ENCODE measurements at regions of chr11 and their contacts with region 1.

Region 1: DNA sequence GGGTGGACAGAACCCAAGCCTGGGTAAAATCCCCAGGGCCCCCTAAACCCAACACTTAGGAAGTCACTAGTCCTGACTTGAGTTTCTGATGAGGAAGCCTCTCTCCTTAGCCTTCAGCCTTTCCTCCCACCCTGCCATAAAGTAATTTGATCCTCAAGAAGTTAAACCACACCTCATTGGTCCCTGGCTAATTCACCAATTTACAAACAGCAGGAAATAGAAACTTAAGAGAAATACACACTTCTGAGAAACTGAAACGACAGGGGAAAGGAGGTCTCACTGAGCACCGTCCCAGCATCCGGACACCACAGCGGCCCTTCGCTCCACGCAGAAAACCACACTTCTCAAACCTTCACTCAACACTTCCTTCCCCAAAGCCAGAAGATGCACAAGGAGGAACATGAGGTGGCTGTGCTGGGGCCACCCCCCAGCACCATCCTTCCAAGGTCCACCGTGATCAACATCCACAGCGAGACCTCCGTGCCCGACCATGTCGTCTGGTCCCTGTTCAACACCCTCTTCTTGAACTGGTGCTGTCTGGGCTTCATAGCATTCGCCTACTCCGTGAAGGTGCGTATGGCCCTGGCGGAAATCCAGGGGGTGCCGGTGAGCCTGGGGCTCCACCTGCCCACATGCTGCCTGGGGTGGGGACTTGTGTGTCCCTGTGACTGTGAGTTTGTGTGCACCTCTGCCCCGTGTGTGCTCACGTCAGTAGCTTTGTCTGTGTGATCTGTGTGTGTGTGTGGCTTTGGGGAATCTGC is at the start of gene IFITM1:
- DNase-seq: peak; percentile 74
- H3K4me3 Mint-ChIP-seq: peak within 1 kb of the TSS; percentile 90
- H3K27ac Mint-ChIP-seq: peak within 1 kb of the TSS; percentile 91
- H3K4me1 Mint-ChIP-seq: peaks cover 34% of the 10 kb centered on the region
- H3K27me3 Mint-ChIP-seq: no peaks in the 10 kb centered on the region
- total RNA-seq, gene IFITM1: 256 and 260 TPM in 2 replicates

Region 2: GRCh38 chr11:236774-237767 is 76.9 kb before region 1 on chr11 and contains the start of gene PSMD13:
- intact Hi-C with region 1: loop called (anchors 2 kb)
- DNase-seq: peak; percentile 87
- H3K4me3 Mint-ChIP-seq: peak within 1 kb of the TSS; percentile 96
- H3K27ac Mint-ChIP-seq: peak within 1 kb of the TSS; percentile 100
- H3K4me1 Mint-ChIP-seq: peaks cover 53% of the 10 kb centered on the region
- H3K27me3 Mint-ChIP-seq: no peaks in the 10 kb centered on the region
- total RNA-seq, gene PSMD13: 255 and 258 TPM in 2 replicates

Region 3: GRCh38 chr11:269146-269890 is 44.6 kb before region 1 on chr11:
- intact Hi-C with region 1: loop called (anchors 2 kb)
- DNase-seq: peak; percentile 55
- H3K4me3 Mint-ChIP-seq: peak overlapping the region; percentile 89
- H3K27ac Mint-ChIP-seq: peak overlapping the region; percentile 97
- H3K4me1 Mint-ChIP-seq: peaks cover 34% of the 10 kb centered on the region
- H3K27me3 Mint-ChIP-seq: peaks cover 8% of the 10 kb centered on the region

Region 4: GRCh38 chr11:326842-327580 is 13.0 kb after region 1 on chr11:
- intact Hi-C with region 1: loop called (anchors 2 kb)
- DNase-seq: no peak
- H3K4me3 Mint-ChIP-seq: peak overlapping the region; percentile 71
- H3K27ac Mint-ChIP-seq: peak overlapping the region; percentile 94
- H3K4me1 Mint-ChIP-seq: peaks cover 64% of the 10 kb centered on the region
- H3K27me3 Mint-ChIP-seq: no peaks in the 10 kb centered on the region

Region 5: GRCh38 chr11:355581-356458 is 41.9 kb after region 1 on chr11:
- intact Hi-C with region 1: loop called (anchors 2 kb)
- DNase-seq: peak; percentile 85
- H3K4me3 Mint-ChIP-seq: peak overlapping the region; percentile 86
- H3K27ac Mint-ChIP-seq: peak overlapping the region; percentile 94
- H3K4me1 Mint-ChIP-seq: peaks cover 27% of the 10 kb centered on the region
- H3K27me3 Mint-ChIP-seq: peaks cover 2% of the 10 kb centered on the region

Region 6: DNA sequence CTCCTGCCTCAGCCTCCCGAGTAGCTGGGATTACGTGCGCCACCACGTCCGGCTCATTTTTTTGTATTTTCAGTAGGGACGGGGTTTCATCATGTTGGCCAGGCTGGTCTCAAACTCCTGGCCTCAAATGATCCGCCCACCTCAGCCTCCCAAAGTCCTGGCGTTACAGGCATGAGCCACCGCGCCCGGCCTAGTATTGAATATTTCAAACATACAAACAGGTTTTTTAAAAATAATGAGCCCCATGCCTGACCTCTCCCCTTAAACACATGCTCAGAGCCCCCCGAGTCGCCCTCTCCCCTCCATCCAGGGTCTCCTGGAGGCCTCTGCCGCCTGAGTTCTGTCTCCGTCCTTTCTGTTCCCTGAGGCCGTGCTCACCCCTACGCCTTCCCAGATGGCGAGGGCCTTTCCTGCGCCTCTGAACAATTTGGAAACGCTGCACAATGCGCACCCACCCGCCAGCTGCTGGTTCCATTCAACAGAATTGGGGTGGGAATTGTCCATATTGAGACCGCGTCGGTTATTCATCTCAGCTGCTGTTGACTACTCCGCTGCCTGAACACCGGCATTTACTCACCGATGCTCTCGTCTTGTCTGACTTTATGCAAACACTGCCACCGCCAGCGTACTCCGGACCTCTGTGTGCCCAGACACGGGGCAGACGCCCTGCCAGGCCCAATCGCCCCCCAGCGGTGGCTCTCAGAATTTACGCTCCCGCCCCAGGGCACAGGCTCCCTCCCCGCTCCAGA is 206.6 kb after region 1 on chr11:
- intact Hi-C with region 1: no loop called
- DNase-seq: no peak
- H3K4me3 Mint-ChIP-seq: no peak overlapping the region
- H3K27ac Mint-ChIP-seq: no peak overlapping the region
- H3K4me1 Mint-ChIP-seq: peaks cover 3% of the 10 kb centered on the region
- H3K27me3 Mint-ChIP-seq: no peaks in the 10 kb centered on the region

Measured in activated T-helper 2 cell treated with anti-CD3 and anti-CD28 coated beads, Interferon-gamma antibody, Interleukin-2, Interleukin-4, amounts not matched to agents 10 μg/mL and 5 μg/mL and 100 μg/mL, durations not matched to agents 14 hours and 24 hours and 36 hours (primary cell).